Activated CD4-positive, alpha-beta T cell treated with anti-CD3 and anti-CD28 coated beads, Interleukin-2, amount 10 ng/mL, durations not matched to agents 24 days and 14 days (primary cell): ENCODE measurements at regions of chr1 and their contacts with region 1.

Region 1: DNA sequence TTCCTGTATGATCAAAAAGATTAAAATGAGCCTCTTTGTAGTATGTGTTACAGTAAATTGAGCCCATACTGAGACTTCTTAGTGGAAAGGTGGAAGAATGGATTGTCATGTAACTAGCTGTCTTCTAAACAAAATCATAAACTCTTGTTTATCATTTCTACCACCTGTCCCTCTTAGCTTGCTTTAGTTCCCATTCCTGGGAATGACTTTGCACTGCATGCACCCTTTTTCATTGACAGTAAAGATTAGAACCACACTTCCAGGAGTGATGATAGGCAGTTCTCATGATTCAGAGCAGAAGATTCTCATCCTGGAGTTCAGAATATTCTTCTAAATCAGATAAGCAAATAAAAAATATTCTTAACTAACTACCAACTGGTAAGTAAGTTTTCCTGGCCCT is 28.0 kb downstream of the DENND2D start:
- DNase-seq: no peak
- H3K4me3 Mint-ChIP-seq: no peak overlapping the region
- H3K27ac Mint-ChIP-seq: no peak overlapping the region
- H3K4me1 Mint-ChIP-seq: peaks cover 7% of the 10 kb centered on the region
- H3K27me3 Mint-ChIP-seq: no peaks in the 10 kb centered on the region

Region 2: DNA sequence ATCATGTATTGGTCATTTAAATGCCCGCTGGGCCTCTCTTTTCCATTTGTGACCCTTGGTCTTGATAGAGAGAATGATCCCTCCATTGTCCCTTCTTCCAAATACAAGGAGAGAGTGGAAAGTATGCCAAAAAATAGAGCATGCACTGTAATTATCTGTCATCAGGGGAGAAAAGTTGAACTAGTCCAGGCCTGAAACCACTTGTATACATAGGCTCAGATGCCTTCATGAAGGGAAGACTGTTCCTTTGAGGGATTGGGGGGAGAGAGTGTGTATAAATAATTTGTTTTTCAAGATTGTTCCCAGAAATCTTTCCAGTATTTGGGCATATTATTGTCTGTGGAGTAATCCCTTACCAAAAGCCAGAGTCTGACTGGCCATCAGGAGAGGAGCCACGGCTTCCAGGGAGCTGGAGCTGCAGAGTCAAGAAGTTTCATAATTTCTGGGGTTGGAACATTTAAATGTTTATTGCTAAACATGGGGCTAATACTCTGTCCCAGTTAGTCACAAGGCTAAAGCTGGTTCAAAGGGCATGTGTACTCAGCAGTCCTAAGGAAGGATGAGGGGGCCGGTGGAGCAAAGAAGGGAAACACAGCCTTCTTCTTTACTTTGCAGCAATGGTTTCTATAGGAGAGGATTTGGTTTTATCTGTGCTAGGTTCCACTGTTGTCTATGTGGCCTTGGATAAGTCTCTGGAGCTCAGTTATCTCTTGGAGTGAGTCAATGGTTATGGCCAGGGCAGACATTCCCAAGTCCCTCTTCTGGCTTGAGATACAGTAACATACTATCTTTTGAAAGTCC is 18.4 kb after region 1 on chr1:
- intact Hi-C with region 1: loop called (anchors 2 kb)
- DNase-seq: no peak
- H3K4me3 Mint-ChIP-seq: peak overlapping the region; percentile 15
- H3K27ac Mint-ChIP-seq: peak overlapping the region; percentile 43
- H3K4me1 Mint-ChIP-seq: peaks cover 79% of the 10 kb centered on the region
- H3K27me3 Mint-ChIP-seq: no peaks in the 10 kb centered on the region